ENCODE measurements at regions of chr10 and their contacts with region 1.

Region 1: DNA sequence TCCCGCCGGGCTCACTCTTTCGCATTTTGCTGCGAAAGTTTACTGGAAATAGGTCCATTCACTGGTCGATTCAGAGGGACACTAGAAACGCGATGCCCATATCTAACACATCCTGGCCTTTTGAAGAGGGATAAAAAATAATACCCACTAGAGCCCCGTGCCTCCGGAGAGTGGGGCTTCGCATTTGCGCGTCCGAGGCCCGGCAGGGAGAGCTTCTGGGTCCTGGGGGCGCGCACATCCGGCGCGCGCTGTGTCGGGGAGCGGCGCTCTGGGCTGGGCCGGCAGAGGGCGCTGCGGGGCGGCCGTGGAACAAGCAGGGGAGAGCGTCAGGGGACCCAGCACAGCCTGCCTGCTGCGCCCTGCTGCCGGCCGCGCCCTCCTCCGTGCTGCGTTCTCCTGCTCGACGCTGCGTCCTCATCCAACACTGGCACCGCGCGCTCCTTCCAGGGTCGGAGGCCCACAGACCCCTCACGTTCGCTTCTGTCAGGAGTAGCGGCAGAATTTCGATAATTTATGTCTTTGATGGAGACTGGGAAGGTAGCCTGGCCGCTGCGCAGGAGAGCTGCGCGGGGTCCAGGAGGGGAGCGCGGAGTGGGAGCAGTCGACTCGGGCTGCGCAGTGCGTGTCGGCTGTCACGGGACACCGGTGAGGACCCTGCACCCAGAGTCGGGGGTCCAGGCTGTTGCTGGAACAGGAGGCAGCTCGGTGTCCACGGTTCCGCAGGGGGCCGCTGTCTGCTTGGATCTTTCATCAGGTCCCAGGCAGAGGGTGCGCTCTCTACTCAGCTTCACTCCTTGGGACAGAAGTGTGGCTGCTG is 41.5 kb upstream of the ZNF32 start:
- DNase-seq: peak; percentile 73 to 86 (median 82)
- H3K4me3 ChIP-seq: peak overlapping the region; percentile 60 to 69
- H3K4me3 Mint-ChIP-seq: peak overlapping the region; percentile 86 to 93 (median 90)
- H3K27ac ChIP-seq: peak overlapping the region; percentile 3
- H3K27ac Mint-ChIP-seq: peak overlapping the region in 5 of 7 donors; percentile 24 to 82 (median 62)
- H3K4me1 ChIP-seq: peaks cover 6% of the 10 kb centered on the region
- H3K4me1 Mint-ChIP-seq: peaks cover 2 to 19% (median 8%) of the 10 kb centered on the region in 4 donors
- H3K27me3 ChIP-seq: no peaks in the 10 kb centered on the region
- H3K27me3 Mint-ChIP-seq: peaks cover 14 to 18% of the 10 kb centered on the region in 2 donors

Region 2: GRCh38 chr10:43648398-43649184 is 41.6 kb before region 1 on chr10 and contains the start of gene ZNF32:
- CTCF ChIA-PET with region 1: interaction called, 7 read pairs
- POLR2A ChIA-PET with region 1: interaction called, 15 read pairs
- intact Hi-C with region 1: loop called (anchors 2 kb)
- DNase-seq: peak; percentile 80 to 83 (median 82)
- H3K4me3 ChIP-seq: peak within 1 kb of the TSS; percentile 66 to 78
- H3K4me3 Mint-ChIP-seq: peak within 1 kb of the TSS; percentile 93 to 98 (median 94)
- H3K27ac ChIP-seq: peak within 1 kb of the TSS; percentile 76
- H3K27ac Mint-ChIP-seq: peak within 1 kb of the TSS; percentile 84 to 96 (median 93)
- H3K4me1 ChIP-seq: peaks cover 18% of the 10 kb centered on the region
- H3K4me1 Mint-ChIP-seq: peaks cover 11 to 38% (median 18%) of the 10 kb centered on the region in 4 donors
- H3K27me3 ChIP-seq: no peaks in the 10 kb centered on the region
- H3K27me3 Mint-ChIP-seq: peaks cover 4 to 6% of the 10 kb centered on the region in 2 donors
- total RNA-seq, gene ZNF32: 35.5 to 39.5 TPM

Region 3: GRCh38 chr10:43680035-43680434 is 10.1 kb before region 1 on chr10:
- CTCF ChIA-PET with region 1: interaction called, 10 read pairs
- POLR2A ChIA-PET with region 1: interaction called, 4 read pairs
- intact Hi-C with region 1: no loop called
- DNase-seq: no peak
- H3K4me3 ChIP-seq: no peak overlapping the region
- H3K4me3 Mint-ChIP-seq: no peak overlapping the region
- H3K27ac ChIP-seq: no peak overlapping the region
- H3K27ac Mint-ChIP-seq: no peak overlapping the region
- H3K4me1 ChIP-seq: no peaks in the 10 kb centered on the region
- H3K4me1 Mint-ChIP-seq: peaks cover 0 to 3% (median 0%) of the 10 kb centered on the region in 4 donors
- H3K27me3 ChIP-seq: no peaks in the 10 kb centered on the region
- H3K27me3 Mint-ChIP-seq: peaks cover 11 to 33% of the 10 kb centered on the region in 2 donors

Region 4: GRCh38 chr10:43754569-43755260 is 64.6 kb after region 1 on chr10:
- CTCF ChIA-PET with region 1: no interaction called
- POLR2A ChIA-PET with region 1: no interaction called
- intact Hi-C with region 1: no loop called
- DNase-seq: no peak
- H3K4me3 ChIP-seq: no peak overlapping the region
- H3K4me3 Mint-ChIP-seq: no peak overlapping the region
- H3K27ac ChIP-seq: no peak overlapping the region
- H3K27ac Mint-ChIP-seq: peak overlapping the region in 1 of 7 donors; percentile 34
- H3K4me1 ChIP-seq: no peaks in the 10 kb centered on the region
- H3K4me1 Mint-ChIP-seq: no peaks in the 10 kb centered on the region
- H3K27me3 ChIP-seq: no peaks in the 10 kb centered on the region
- H3K27me3 Mint-ChIP-seq: no peaks in the 10 kb centered on the region

Region 5: DNA sequence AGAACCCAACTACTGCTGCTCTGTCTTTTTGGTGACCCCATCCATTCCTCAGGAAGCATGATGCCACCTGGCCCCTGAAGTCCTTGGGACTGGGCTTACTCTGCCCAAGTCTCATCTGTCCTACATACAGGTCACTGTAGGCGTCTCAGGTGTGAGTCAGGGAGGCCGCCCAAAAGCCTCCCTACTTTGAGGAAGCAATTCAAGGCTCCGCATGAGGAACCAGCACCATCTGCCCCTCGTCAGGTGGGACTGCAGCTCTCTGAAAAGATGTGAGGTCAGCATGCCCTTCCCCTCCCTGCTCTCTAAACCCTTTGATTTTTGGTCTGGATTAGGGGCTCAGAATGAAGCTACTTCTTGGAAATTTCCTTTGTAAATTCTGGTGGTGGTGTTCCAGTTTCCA is 340.0 kb after region 1 on chr10:
- CTCF ChIA-PET with region 1: interaction called, 20 read pairs
- POLR2A ChIA-PET with region 1: no interaction called
- intact Hi-C with region 1: loop called (anchors 1 kb)
- DNase-seq: peak in 4 of 5 donors; percentile 4 to 33 (median 20)
- H3K4me3 ChIP-seq: no peak overlapping the region
- H3K4me3 Mint-ChIP-seq: no peak overlapping the region
- H3K27ac ChIP-seq: no peak overlapping the region
- H3K27ac Mint-ChIP-seq: no peak overlapping the region
- H3K4me1 ChIP-seq: no peaks in the 10 kb centered on the region
- H3K4me1 Mint-ChIP-seq: no peaks in the 10 kb centered on the region
- H3K27me3 ChIP-seq: peaks cover 3% of the 10 kb centered on the region
- H3K27me3 Mint-ChIP-seq: peaks cover 0 to 11% of the 10 kb centered on the region in 2 donors

Region 6: DNA sequence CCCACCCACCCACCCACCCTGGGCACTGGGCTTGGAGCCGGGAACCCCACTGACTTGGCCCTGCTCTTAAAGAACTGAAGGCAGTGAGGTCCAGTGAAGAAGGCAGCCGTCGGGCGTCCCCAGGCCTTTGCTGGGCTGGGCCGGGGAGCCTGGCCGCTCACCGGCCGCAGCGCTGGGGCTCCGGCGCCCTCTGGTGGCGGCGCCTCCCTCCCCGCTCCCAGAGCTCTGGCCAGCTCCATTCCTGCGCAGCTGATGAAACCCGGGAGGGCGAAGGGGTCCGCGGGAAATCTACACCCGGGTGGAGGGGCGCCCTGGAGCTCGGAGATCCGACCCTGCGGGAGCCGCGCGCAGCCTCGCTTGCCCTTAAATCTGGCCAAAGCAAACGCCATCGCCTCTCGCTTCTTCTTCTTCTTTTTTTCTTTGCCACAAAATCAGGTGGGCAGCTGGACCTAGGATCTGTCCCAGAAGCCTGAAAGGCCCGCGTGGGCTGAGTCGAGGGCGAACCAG is 696.4 kb after region 1 on chr10:
- CTCF ChIA-PET with region 1: interaction called, 14 read pairs
- POLR2A ChIA-PET with region 1: interaction called, 3 read pairs
- intact Hi-C with region 1: no loop called
- DNase-seq: peak in 4 of 5 donors; percentile 5 to 22 (median 10)
- H3K4me3 ChIP-seq: no peak overlapping the region
- H3K4me3 Mint-ChIP-seq: no peak overlapping the region
- H3K27ac ChIP-seq: no peak overlapping the region
- H3K27ac Mint-ChIP-seq: no peak overlapping the region
- H3K4me1 ChIP-seq: no peaks in the 10 kb centered on the region
- H3K4me1 Mint-ChIP-seq: peaks cover 2 to 10% (median 4%) of the 10 kb centered on the region in 4 donors
- H3K27me3 ChIP-seq: no peaks in the 10 kb centered on the region
- H3K27me3 Mint-ChIP-seq: peaks cover 14 to 23% of the 10 kb centered on the region in 2 donors